BJ (cell line): ENCODE measurements at regions of chr1 and their contacts with region 1.

Region 1: GRCh38 chr1:204438628-204439027 is 27.0 kb upstream of the PPP1R15B start:
- DNase-seq: peak; percentile 94
- H3K4me3 ChIP-seq: no peak overlapping the region
- H3K27me3 ChIP-seq: no peaks in the 10 kb centered on the region
- CTCF ChIP-seq: no peak

Region 2: DNA sequence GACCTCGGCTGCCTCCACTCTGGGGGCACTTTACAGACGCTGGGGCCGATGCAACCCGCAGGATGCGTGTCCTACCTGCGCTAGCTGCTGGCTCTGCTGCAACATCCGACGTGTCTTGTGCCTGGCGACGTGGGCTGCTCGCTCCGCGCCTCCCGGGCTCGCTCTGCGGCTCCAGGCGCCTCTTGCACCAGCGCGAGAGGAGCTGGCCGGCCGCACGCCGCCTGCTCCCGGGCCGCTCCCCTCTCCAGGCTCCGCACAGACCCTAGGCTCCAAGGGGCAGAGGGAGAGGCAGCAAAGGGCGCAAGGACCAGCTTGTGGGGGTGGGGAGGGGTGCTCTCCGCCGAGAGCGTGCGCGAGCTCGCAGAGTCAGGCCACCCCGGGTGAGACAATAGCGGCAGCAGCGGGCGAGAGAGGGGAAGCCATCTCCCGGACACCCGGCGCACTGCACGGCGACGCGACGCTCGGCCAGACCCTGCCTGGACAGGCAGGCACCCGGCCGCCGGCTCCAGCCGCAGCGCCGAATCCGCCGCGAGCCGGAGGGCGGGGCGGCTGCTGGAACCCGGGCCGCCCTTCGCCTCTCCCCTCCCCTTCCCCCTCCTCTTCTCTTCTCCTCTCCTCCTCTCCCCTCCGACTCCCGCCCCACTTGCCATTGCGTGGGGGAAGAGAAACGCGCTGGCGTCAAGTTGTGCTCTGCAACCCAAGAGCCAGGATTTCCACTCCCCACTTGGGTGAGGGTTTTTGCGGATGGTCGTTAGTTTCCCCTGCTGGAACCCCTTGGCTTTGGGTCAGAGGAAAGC is 55.9 kb after region 1 on chr1 and contains the start of gene PIK3C2B:
- CTCF ChIA-PET with region 1: interaction called, 194 read pairs
- POLR2A ChIA-PET with region 1: interaction called, 3 read pairs
- DNase-seq: no peak
- H3K4me3 ChIP-seq: peak within 1 kb of the TSS; percentile 64
- H3K27me3 ChIP-seq: peaks cover 3% of the 10 kb centered on the region
- CTCF ChIP-seq: peak; percentile 53
- polyA plus RNA-seq, gene PIK3C2B: 5.1 and 7.9 TPM in 2 replicates